Naive thymus-derived CD8-positive, alpha-beta T cell (primary cell): ENCODE measurements at regions of chr6 and their contacts with region 1.

Region 1: DNA sequence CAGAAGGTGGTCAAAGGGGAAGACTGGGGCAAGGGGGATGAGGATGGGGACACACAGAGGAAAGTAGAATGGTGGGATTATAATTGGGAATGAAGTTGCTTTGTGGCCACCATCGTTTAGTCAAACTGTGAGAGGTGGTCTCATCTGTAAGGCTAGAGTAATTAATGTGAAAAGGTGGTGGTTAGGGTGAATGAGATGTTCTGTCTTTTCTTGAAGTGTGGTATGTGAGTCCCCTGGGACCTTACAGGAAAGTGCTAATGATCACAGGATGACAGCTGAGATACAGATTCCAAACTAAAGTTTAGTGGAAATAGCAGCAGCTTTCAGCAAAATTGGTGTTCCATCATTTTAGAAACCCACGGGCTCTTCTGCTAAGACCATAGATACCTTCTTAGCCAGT is 10.7 kb downstream of the ZFAND3 start:
- DNase-seq: no peak
- ATAC-seq: no peak
- H3K4me3 Mint-ChIP-seq: peak overlapping the region in 2 of 10 donors; percentile 15 to 31
- H3K27ac Mint-ChIP-seq: peak overlapping the region in 6 of 10 donors; percentile 6 to 83 (median 46)
- H3K4me1 Mint-ChIP-seq: peaks cover 31 to 81% (median 69%) of the 10 kb centered on the region in 4 donors
- H3K27me3 Mint-ChIP-seq: no peaks in the 10 kb centered on the region

Region 2: GRCh38 chr6:37819177-37819823 is 10.9 kb before region 1 on chr6 and contains the start of gene ZFAND3:
- POLR2A ChIA-PET with region 1: interaction called, 15 read pairs
- DNase-seq: peak; percentile 81 to 98 (median 91)
- ATAC-seq: peak; percentile 81 to 82
- H3K4me3 Mint-ChIP-seq: peak within 1 kb of the TSS; percentile 93 to 99 (median 98)
- H3K27ac Mint-ChIP-seq: peak within 1 kb of the TSS; percentile 95 to 99 (median 98)
- H3K4me1 Mint-ChIP-seq: peaks cover 24 to 62% (median 55%) of the 10 kb centered on the region in 4 donors
- H3K27me3 Mint-ChIP-seq: peaks cover 0 to 1% (median 0%) of the 10 kb centered on the region in 5 donors
- polyA plus RNA-seq, gene ZFAND3: 3.7 to 4.5 (median 3.8) TPM

Region 3: GRCh38 chr6:38648629-38649028 is 818.4 kb after region 1 on chr6:
- POLR2A ChIA-PET with region 1: interaction called, 10 read pairs
- DNase-seq: no peak
- ATAC-seq: no peak
- H3K4me3 Mint-ChIP-seq: no peak overlapping the region
- H3K27ac Mint-ChIP-seq: no peak overlapping the region
- H3K4me1 Mint-ChIP-seq: peaks cover 0 to 1% (median 0%) of the 10 kb centered on the region in 4 donors
- H3K27me3 Mint-ChIP-seq: no peaks in the 10 kb centered on the region